MCF 10A (cell line): ENCODE measurements at regions of chr17 and their contacts with region 1.

Region 1: GRCh38 chr17:50079334-50080095 is 15.6 kb upstream of the PDK2 start:
- DNase-seq: peak; percentile 74
- H3K4me3 Mint-ChIP-seq: no peak overlapping the region
- H3K27ac Mint-ChIP-seq: peak overlapping the region; percentile 43
- H3K4me1 Mint-ChIP-seq: peaks cover 12% of the 10 kb centered on the region
- H3K27me3 Mint-ChIP-seq: no peaks in the 10 kb centered on the region
- CTCF ChIP-seq: peak; percentile 54

Region 2: DNA sequence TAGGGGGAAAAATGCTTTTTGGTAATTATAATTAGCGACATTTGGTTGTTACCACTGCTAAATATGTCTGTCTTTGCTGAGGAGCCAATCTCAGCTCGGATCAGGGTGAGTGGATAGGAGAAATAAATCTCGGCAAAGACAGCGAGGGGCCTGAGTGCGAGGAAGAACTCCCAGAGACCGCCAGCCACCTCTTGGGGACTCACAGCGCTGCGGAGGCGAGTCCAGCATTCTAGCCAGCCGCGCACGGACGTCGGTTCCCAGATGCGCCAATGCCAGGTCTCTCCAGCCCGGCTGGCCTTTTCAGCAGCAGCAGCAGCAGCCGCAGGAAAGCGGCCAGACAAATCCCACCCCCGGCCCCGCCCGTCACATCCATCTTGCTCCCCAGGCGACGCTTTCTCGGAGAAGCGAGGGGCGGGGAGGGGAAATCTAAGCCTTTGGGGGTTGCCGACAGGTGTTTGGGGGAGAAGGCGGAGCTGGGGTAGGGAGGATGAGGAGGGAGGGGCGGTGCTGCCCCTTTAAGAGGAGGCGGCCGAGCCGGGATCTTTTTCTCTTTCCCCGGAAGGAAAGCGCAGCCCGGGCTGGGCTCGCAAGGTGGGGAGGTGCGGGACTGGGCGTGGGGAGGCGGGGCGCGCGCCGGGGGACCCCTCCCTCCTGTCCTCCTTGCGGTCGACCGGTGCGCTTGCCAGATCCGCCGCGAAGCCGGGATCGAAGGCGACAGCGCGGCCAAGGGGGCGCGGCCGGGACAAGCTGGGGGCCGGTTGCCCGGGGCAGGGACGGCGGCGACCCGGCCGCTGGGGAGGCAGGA is 23.9 kb before region 1 on chr17 and contains the start of gene ITGA3:
- CTCF ChIA-PET with region 1: interaction called, 12 read pairs
- POLR2A ChIA-PET with region 1: interaction called, 29 read pairs
- intact Hi-C with region 1: no loop called
- DNase-seq: peak; percentile 98
- H3K4me3 Mint-ChIP-seq: peak within 1 kb of the TSS; percentile 80
- H3K27ac Mint-ChIP-seq: peak within 1 kb of the TSS; percentile 95
- H3K4me1 Mint-ChIP-seq: peaks cover 64% of the 10 kb centered on the region
- H3K27me3 Mint-ChIP-seq: no peaks in the 10 kb centered on the region
- CTCF ChIP-seq: no peak
- total RNA-seq, gene ITGA3: 588 and 717 TPM in 2 replicates

Region 3: DNA sequence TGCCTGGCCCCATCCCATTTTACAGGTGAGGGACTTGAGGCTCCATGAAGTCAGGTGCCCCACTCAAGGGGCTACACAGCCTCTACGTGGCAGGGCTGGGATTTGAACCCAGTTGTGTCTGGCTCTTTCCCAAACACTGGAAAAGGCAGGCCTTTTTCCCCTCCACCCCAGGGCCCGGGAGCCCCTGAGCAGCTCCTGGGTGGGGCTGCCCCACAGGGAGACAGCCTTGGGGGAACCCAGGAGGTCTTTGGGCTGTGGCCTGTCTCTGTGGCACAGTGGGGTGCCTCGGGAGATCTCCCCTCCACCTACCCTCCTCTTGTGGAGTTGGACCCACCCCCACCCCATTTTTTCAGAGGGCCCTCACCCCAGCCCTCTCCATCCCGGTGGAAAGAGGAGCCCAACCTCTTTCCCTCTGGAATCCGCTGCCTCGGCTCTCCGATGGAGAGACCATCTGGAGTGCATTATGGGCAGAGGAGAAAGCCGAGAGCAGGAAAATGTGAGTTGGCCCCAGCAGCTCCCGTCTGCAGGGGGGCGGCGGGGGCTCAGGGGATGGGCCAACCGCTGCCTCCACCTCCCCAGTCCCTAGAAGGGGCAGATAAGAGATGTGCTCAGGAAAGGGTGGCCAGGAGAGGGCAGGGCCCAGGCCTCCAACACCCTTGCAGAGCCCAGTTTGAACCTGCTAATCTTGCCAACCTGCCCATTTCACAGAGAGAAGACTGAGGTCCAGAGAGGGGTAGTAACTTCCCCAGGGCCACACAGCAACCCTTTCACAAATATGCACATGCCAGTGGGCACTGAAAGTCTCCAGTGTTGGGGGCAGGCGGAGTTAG is 179.3 kb after region 1 on chr17:
- CTCF ChIA-PET with region 1: no interaction called
- POLR2A ChIA-PET with region 1: no interaction called
- intact Hi-C with region 1: no loop called
- DNase-seq: no peak
- H3K4me3 Mint-ChIP-seq: no peak overlapping the region
- H3K27ac Mint-ChIP-seq: no peak overlapping the region
- H3K4me1 Mint-ChIP-seq: no peaks in the 10 kb centered on the region
- H3K27me3 Mint-ChIP-seq: no peaks in the 10 kb centered on the region
- CTCF ChIP-seq: no peak